ENCODE measurements at regions of chr16 and their contacts with region 1.

Region 1: DNA sequence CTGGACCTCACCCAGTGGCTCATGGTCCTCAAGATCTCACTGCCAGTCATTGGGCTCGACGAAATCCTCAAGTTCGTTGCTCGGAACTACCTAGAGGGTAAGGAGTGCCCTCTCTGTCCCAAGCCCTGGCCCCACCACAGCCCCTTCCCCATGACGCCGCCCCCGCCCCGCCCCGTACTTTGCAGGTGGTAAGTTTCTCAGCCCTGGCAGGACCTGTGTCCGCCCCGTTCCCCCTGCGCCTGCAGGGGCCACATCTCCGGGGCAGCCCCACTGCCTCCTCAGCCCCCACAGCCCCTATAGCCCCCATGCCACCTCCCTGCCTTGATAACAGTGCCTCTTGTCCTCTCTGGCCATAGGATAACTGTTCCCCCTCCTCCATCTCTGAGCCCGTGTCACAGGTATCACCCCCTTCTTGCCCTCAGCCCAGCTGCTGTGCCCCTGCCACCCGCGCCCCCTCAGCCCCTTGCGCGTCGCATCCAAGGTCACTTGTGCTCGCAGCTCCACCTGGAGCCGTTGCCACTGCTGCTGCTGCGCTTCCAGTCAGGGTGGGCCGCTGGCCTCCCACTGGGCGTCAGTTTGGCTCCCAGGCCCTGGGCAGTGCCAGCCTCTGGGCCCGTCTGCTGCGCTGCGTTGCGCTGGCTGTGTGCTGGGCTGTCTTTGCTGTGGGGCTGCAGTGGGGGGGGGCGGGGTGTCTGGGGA is 21.5 kb downstream of the RABEP2 start:
- DNase-seq: no peak

Region 2: DNA sequence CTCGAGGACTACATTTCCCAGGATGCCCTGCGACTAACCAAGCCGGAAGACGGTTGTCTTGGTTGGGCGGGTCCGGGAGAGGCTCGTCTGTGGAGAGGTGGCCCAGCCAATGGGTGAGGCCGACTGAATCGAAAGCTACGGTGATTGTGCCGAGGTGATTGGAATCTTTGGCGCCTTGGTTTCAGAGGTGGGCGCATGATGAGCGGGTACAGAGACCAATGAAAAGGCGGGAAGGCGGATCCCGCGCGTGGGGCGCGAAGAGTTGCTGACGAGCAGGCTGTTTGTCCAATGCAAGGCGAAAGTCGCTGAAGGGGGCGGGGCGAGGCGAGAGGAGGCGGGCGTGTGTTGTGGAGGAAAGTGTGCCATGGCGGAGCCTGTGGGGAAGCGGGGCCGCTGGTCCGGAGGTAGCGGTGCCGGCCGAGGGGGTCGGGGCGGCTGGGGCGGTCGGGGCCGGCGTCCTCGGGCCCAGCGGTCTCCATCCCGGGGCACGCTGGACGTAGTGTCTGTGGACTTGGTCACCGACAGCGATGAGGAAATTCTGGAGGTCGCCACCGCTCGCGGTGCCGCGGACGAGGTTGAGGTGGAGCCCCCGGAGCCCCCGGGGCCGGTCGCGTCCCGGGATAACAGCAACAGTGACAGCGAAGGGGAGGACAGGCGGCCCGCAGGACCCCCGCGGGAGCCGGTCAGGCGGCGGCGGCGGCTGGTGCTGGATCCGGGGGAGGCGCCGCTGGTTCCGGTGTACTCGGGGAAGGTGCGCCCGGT is 47.3 kb after region 1 on chr16 and contains the start of gene NFATC2IP:
- intact Hi-C with region 1: loop called in 1 of 2 experiments (anchors 1 kb)
- DNase-seq: peak; percentile 100
- total RNA-seq, gene NFATC2IP: 19.5 to 20.2 TPM